ENCODE measurements at regions of chr17 and their contacts with region 1.

Region 1: GRCh38 chr17:35540589-35541404 is 3.3 kb upstream of the SLFN12L start:
- DNase-seq: peak; percentile 34
- H3K4me3 Mint-ChIP-seq: peak overlapping the region; percentile 86
- H3K27ac Mint-ChIP-seq: peak overlapping the region; percentile 99
- H3K4me1 Mint-ChIP-seq: peaks cover 57% of the 10 kb centered on the region
- H3K27me3 Mint-ChIP-seq: no peaks in the 10 kb centered on the region

Region 2: DNA sequence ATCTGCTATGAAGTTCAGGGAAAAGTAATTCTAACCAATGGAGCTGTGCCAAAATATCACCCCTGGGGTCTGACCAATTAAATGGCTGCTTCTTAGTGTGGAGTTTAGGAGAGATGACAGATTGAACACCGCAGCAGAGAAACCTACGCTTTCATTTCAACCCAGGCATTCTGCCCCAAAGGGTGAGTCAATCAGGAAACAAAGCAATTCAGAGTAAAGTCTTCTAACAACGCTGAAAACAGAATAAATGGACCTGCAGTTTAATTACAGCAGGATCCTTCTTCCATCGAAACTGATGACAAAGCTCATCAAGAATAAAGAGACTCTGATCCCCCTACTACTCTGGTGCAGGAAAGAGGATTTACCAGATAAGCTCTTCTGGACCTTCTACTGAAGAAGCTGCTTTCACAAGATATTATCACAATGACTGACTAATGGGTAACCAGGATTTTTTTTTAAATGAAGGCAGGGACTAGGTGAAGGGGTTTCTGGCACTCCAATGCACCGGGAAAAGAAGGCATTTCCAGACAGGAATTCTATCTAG is 494.0 kb before region 1 on chr17:
- intact Hi-C with region 1: loop called (anchors 5 kb)
- DNase-seq: peak; percentile 59
- H3K4me3 Mint-ChIP-seq: peak overlapping the region; percentile 77
- H3K27ac Mint-ChIP-seq: peak overlapping the region; percentile 95
- H3K4me1 Mint-ChIP-seq: peaks cover 49% of the 10 kb centered on the region
- H3K27me3 Mint-ChIP-seq: no peaks in the 10 kb centered on the region

Region 3: DNA sequence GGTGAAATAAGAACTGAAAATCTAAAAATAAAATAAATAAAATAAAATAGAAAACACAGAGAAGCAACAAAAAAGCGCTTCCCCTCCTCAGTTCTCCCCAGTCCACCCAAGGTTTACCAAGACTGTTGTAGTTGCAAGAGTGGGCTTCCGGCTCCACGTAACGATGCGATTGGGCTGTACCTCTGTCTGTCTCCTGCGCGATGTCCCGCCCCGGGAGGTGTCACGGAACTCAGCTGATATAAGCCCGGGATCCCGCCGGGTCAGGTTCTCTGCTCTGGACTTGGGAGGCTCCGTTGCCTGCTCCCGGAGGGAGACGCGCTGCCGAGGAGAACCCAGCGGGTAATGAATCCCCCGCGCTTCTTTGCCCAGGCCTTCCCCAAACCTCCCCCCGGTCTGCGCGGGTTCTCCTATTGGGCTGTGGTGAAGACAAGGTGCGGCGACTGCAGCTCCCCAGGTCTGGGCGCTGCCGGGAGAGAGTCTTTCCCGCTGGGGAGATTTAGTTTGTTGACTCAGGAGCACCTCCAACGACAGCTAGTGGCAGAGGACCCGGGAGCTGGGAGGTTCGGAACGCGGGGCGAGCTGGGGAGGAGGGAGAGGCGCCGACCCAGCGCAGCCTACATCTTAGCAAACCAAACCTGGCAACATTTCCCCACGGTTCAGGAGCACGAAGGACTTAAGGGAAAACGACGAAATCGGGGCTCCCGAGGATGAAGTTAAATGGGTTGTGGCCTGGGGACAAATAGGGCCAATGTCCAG is 297.8 kb before region 1 on chr17 and contains the start of gene SLFN5:
- intact Hi-C with region 1: loop called (anchors 1 kb)
- DNase-seq: peak; percentile 91
- H3K4me3 Mint-ChIP-seq: peak within 1 kb of the TSS; percentile 96
- H3K27ac Mint-ChIP-seq: peak within 1 kb of the TSS; percentile 96
- H3K4me1 Mint-ChIP-seq: peaks cover 63% of the 10 kb centered on the region
- H3K27me3 Mint-ChIP-seq: no peaks in the 10 kb centered on the region
- total RNA-seq, gene SLFN5: 8.8 and 9.9 TPM in 2 replicates

Region 4: GRCh38 chr17:35432176-35433074 is 108.4 kb before region 1 on chr17 and contains the start of gene SLFN12:
- intact Hi-C with region 1: loop called (anchors 2 kb)
- DNase-seq: peak; percentile 34
- H3K4me3 Mint-ChIP-seq: peak within 1 kb of the TSS; percentile 90
- H3K27ac Mint-ChIP-seq: peak within 1 kb of the TSS; percentile 94
- H3K4me1 Mint-ChIP-seq: peaks cover 51% of the 10 kb centered on the region
- H3K27me3 Mint-ChIP-seq: no peaks in the 10 kb centered on the region
- total RNA-seq, gene SLFN12: 7.5 and 8.8 TPM in 2 replicates

Region 5: GRCh38 chr17:35568541-35568940 is 27.7 kb after region 1 on chr17:
- intact Hi-C with region 1: loop called (anchors 1 kb)
- DNase-seq: no peak
- H3K4me3 Mint-ChIP-seq: peak overlapping the region; percentile 87
- H3K27ac Mint-ChIP-seq: peak overlapping the region; percentile 80
- H3K4me1 Mint-ChIP-seq: peaks cover 18% of the 10 kb centered on the region
- H3K27me3 Mint-ChIP-seq: peaks cover 17% of the 10 kb centered on the region

Region 6: GRCh38 chr17:35747540-35748017 is 206.8 kb after region 1 on chr17:
- intact Hi-C with region 1: loop called (anchors 5 kb)
- DNase-seq: peak; percentile 65
- H3K4me3 Mint-ChIP-seq: no peak overlapping the region
- H3K27ac Mint-ChIP-seq: no peak overlapping the region
- H3K4me1 Mint-ChIP-seq: peaks cover 13% of the 10 kb centered on the region
- H3K27me3 Mint-ChIP-seq: peaks cover 34% of the 10 kb centered on the region

Region 7: DNA sequence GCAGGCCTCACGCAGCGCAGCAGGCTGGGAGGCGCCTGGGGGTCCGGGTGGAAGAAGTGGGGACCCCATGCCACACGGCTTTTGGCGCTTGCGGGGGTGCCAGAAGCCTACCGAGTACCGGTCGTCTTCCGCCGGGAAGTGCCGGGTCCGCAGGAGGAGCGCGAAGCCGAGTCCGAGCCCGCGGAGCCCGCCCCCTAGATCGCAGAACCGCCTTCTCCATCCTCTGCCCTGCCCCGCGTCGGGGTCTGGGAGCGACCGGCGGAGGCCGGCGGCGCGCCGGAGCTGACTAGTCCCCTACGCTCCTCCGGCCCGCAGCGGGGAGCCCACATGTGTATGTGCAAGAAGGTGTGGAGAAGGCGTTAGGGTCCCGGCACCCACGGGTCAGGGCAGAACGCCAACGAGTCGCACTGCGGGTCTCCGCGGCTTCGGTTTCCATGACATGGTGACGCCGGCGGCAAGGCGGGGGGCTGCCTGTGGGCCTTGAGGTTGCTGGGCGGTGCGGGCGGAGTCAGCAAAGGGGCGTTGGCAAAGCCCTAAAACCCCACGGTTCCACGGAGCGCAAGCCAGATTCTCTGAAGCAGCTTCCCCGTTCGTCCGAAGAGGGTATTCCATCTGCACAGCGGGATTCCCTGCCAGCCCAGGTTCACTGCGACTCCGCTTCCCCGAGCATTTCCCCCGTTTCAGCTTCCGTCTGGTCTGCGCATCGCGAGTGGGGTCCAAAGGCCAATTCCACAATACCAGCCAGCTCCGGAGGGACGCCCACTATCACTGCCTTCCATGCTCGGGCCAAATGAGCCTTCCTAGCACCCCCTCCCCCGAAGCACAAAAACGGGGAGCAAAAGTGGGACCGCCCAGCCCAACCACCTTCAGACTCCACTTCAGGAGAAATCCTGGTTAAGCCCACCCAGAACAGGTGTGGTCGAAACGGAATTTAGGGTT is 1394.2 kb after region 1 on chr17:
- intact Hi-C with region 1: no loop called
- DNase-seq: no peak
- H3K4me3 Mint-ChIP-seq: no peak overlapping the region
- H3K27ac Mint-ChIP-seq: no peak overlapping the region
- H3K4me1 Mint-ChIP-seq: peaks cover 23% of the 10 kb centered on the region
- H3K27me3 Mint-ChIP-seq: peaks cover 85% of the 10 kb centered on the region

Measured in activated T-helper 2 cell treated with anti-CD3 and anti-CD28 coated beads, Interferon-gamma antibody, Interleukin-2, Interleukin-4, amounts not matched to agents 10 μg/mL and 5 μg/mL and 100 μg/mL, durations not matched to agents 14 hours and 24 hours and 36 hours (primary cell).